ENCODE measurements at regions of chr3 and their contacts with region 1.

Region 1: DNA sequence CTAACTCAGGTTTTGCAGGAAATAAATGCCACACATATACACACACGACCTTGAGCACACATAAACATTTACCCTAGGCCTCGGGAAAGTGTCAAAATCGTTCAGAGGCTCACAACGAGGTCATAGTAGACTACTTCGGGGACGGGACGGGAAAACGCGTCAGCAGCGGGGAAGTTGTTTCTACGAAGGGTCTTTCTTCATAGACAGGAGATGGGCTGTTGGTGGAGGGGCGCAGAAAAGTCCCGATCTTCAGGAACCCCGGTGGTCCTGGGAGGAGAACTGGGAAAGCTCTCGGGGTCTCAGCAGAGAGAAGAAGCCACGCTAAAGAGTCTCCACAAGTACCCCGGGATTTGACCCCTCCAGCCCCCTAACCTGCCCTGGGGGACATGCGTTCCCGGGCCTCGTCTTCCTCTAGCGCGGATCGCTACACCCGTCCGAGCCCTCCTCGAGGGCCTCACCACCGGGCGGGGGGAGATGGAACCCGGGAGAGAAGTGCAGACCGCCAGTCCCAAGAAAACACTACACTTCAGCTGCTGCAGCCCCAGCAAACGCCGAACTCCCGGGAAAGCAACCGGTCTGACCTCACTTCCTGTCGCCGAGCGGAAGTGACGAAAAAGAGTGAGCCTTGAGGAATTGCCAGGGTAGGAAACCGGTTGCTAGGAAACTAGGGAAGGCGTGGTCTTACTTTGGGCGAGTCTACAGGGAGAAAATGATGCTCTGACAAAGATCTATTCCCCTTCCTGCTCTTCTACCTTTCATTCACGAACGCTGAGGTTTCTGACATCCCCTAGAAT is at the start of gene PIK3R4:
- DNase-seq: peak; percentile 97
- ATAC-seq: peak; percentile 85
- H3K4me3 ChIP-seq: peak within 1 kb of the TSS; percentile 71 to 96 (median 95)
- H3K4me3 Mint-ChIP-seq: peak within 1 kb of the TSS; percentile 96
- H3K27ac ChIP-seq: peak within 1 kb of the TSS; percentile 76 to 93
- H3K27ac Mint-ChIP-seq: peak within 1 kb of the TSS; percentile 95
- H3K4me1 ChIP-seq: peaks cover 24 to 28% of the 10 kb centered on the region in 2 donors
- H3K4me1 Mint-ChIP-seq: peaks cover 42% of the 10 kb centered on the region
- H3K27me3 ChIP-seq: no peaks in the 10 kb centered on the region
- H3K27me3 Mint-ChIP-seq: no peaks in the 10 kb centered on the region
- CTCF ChIP-seq: no peak
- total RNA-seq, gene PIK3R4: 27.1 and 32.8 TPM in 2 replicates

Region 2: GRCh38 chr3:131026321-131027178 is 280.1 kb after region 1 on chr3 and contains the starts of genes ASTE1 and NEK11:
- CTCF ChIA-PET with region 1: no interaction called
- POLR2A ChIA-PET with region 1: no interaction called
- intact Hi-C with region 1: loop called (anchors 1 kb)
- DNase-seq: peak; percentile 94
- ATAC-seq: peak; percentile 97
- H3K4me3 ChIP-seq: peak within 1 kb of the TSS; percentile 90 to 95 (median 91)
- H3K4me3 Mint-ChIP-seq: peak within 1 kb of the TSS; percentile 97
- H3K27ac ChIP-seq: peak within 1 kb of the TSS; percentile 91 to 94
- H3K27ac Mint-ChIP-seq: peak within 1 kb of the TSS; percentile 98
- H3K4me1 ChIP-seq: peaks cover 31 to 32% of the 10 kb centered on the region in 2 donors
- H3K4me1 Mint-ChIP-seq: peaks cover 48% of the 10 kb centered on the region
- H3K27me3 ChIP-seq: no peaks in the 10 kb centered on the region
- H3K27me3 Mint-ChIP-seq: no peaks in the 10 kb centered on the region
- CTCF ChIP-seq: no peak
- total RNA-seq, gene ASTE1: 21.8 and 23.0 TPM in 2 replicates
- total RNA-seq, gene NEK11: 5.7 and 7.7 TPM in 2 replicates

Region 3: DNA sequence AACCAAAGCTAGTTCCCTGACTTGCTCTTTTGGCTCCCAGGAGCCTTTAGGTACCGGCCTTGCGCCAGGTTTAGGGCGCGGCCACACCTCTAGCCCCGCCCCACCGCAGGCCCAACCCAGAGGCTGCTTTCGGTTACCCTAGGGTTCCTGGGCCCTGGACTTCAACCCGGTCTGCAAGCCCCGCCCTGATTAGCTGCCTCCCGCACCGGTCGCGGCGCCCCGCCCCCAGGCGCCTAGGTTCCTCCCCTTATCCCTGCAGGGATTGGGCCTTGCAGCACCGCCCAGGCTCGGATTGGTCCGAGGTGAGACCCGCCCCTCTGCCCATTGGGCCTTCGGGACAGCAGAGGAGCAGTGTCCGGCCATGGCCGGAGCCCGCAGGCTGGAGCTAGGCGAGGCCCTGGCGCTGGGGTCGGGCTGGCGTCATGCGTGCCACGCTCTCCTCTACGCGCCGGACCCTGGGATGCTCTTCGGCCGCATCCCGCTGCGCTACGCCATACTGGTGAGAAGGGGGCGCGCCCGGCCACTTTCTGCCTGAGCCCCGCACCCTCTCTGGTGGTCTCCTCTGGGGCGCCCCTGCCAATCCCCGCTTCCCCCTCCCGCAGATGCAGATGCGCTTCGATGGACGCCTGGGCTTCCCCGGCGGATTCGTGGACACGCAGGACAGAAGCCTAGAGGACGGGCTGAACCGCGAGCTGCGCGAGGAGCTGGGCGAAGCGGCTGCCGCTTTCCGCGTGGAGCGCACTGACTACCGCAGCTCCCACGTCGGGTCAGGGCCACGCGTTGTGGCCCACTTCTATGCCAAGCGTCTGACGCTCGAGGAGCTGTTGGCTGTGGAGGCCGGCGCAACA is 635.2 kb after region 1 on chr3 and contains the start of gene NUDT16:
- CTCF ChIA-PET with region 1: no interaction called
- POLR2A ChIA-PET with region 1: no interaction called
- intact Hi-C with region 1: loop called (anchors 1 kb)
- DNase-seq: peak; percentile 97
- ATAC-seq: peak; percentile 98
- H3K4me3 ChIP-seq: peak within 1 kb of the TSS; percentile 65 to 99 (median 92)
- H3K4me3 Mint-ChIP-seq: peak within 1 kb of the TSS; percentile 98
- H3K27ac ChIP-seq: peak within 1 kb of the TSS; percentile 57 to 59
- H3K27ac Mint-ChIP-seq: peak within 1 kb of the TSS; percentile 96
- H3K4me1 ChIP-seq: peaks cover 17 to 26% of the 10 kb centered on the region in 2 donors
- H3K4me1 Mint-ChIP-seq: peaks cover 26% of the 10 kb centered on the region
- H3K27me3 ChIP-seq: no peaks in the 10 kb centered on the region
- H3K27me3 Mint-ChIP-seq: no peaks in the 10 kb centered on the region
- CTCF ChIP-seq: peak; percentile 39
- total RNA-seq, gene NUDT16: 17.6 and 19.1 TPM in 2 replicates

Measured in B cell (primary cell).